T-cell (primary cell): ENCODE measurements at regions of chr16 and their contacts with region 1.

Region 1: GRCh38 chr16:67521095-67521804 is 7.4 kb upstream of the RIPOR1 start:
- DNase-seq: peak; percentile 85 to 99 (median 95)
- ATAC-seq: peak; percentile 86 to 94 (median 90)
- H3K4me3 ChIP-seq: peak overlapping the region; percentile 64
- H3K4me3 Mint-ChIP-seq: peak overlapping the region; percentile 86 to 96 (median 86)
- H3K27ac ChIP-seq: peak overlapping the region; percentile 97
- H3K27ac Mint-ChIP-seq: peak overlapping the region; percentile 95 to 96
- H3K4me1 ChIP-seq: peaks cover 0 to 37% of the 10 kb centered on the region in 2 experiments
- H3K4me1 Mint-ChIP-seq: peaks cover 18 to 37% (median 35%) of the 10 kb centered on the region in 3 donors
- H3K27me3 ChIP-seq: no peaks in the 10 kb centered on the region
- H3K27me3 Mint-ChIP-seq: no peaks in the 10 kb centered on the region

Region 2: GRCh38 chr16:67470359-67470758 is 50.9 kb before region 1 on chr16:
- CTCF ChIA-PET with region 1: no interaction called
- POLR2A ChIA-PET with region 1: no interaction called
- DNase-seq: no peak
- ATAC-seq: no peak
- H3K4me3 ChIP-seq: no peak overlapping the region
- H3K4me3 Mint-ChIP-seq: no peak overlapping the region
- H3K27ac ChIP-seq: no peak overlapping the region
- H3K27ac Mint-ChIP-seq: no peak overlapping the region
- H3K4me1 ChIP-seq: peaks cover 0 to 25% of the 10 kb centered on the region in 2 experiments
- H3K4me1 Mint-ChIP-seq: peaks cover 62 to 78% (median 63%) of the 10 kb centered on the region in 3 donors
- H3K27me3 ChIP-seq: no peaks in the 10 kb centered on the region
- H3K27me3 Mint-ChIP-seq: no peaks in the 10 kb centered on the region

Region 3: GRCh38 chr16:67480833-67481560 is 40.3 kb before region 1 on chr16 and contains the start of gene ATP6V0D1:
- CTCF ChIA-PET with region 1: interaction called in 1 of 2 experiments, 27 read pairs
- POLR2A ChIA-PET with region 1: interaction called in 1 of 2 experiments, 3 read pairs
- DNase-seq: peak; percentile 96 to 99 (median 98)
- ATAC-seq: peak; percentile 89 to 95 (median 92)
- H3K4me3 ChIP-seq: peak within 1 kb of the TSS; percentile 93 to 100
- H3K4me3 Mint-ChIP-seq: peak within 1 kb of the TSS; percentile 93 to 97 (median 95)
- H3K27ac ChIP-seq: peak within 1 kb of the TSS; percentile 98
- H3K27ac Mint-ChIP-seq: peak within 1 kb of the TSS; percentile 92 to 99
- H3K4me1 ChIP-seq: peaks cover 5 to 51% of the 10 kb centered on the region in 2 experiments
- H3K4me1 Mint-ChIP-seq: peaks cover 49 to 68% (median 54%) of the 10 kb centered on the region in 3 donors
- H3K27me3 ChIP-seq: no peaks in the 10 kb centered on the region
- H3K27me3 Mint-ChIP-seq: no peaks in the 10 kb centered on the region
- total RNA-seq, gene ATP6V0D1: 41.5 to 49.6 (median 45.8) TPM

Region 4: GRCh38 chr16:67546761-67547422 is 25.6 kb after region 1 on chr16:
- CTCF ChIA-PET with region 1: interaction called, 4 to 21 read pairs
- POLR2A ChIA-PET with region 1: no interaction called
- DNase-seq: peak in 33 of 35 experiments; percentile 37 to 88 (median 63)
- ATAC-seq: peak; percentile 39 to 52 (median 50)
- H3K4me3 ChIP-seq: peak overlapping the region; percentile 10 to 28
- H3K4me3 Mint-ChIP-seq: peak overlapping the region; percentile 67 to 73 (median 72)
- H3K27ac ChIP-seq: peak overlapping the region; percentile 67
- H3K27ac Mint-ChIP-seq: peak overlapping the region; percentile 99
- H3K4me1 ChIP-seq: peaks cover 16 to 50% of the 10 kb centered on the region in 2 experiments
- H3K4me1 Mint-ChIP-seq: peaks cover 51 to 68% (median 58%) of the 10 kb centered on the region in 3 donors
- H3K27me3 ChIP-seq: no peaks in the 10 kb centered on the region
- H3K27me3 Mint-ChIP-seq: no peaks in the 10 kb centered on the region

Region 5: GRCh38 chr16:67641779-67642708 is 120.8 kb after region 1 on chr16:
- CTCF ChIA-PET with region 1: interaction called, 13 to 29 read pairs
- POLR2A ChIA-PET with region 1: interaction called in 1 of 2 experiments, 3 read pairs
- DNase-seq: no peak
- ATAC-seq: no peak
- H3K4me3 ChIP-seq: no peak overlapping the region
- H3K4me3 Mint-ChIP-seq: no peak overlapping the region
- H3K27ac ChIP-seq: no peak overlapping the region
- H3K27ac Mint-ChIP-seq: peak overlapping the region; percentile 11 to 39
- H3K4me1 ChIP-seq: peaks cover 0 to 28% of the 10 kb centered on the region in 2 experiments
- H3K4me1 Mint-ChIP-seq: peaks cover 6 to 17% (median 16%) of the 10 kb centered on the region in 3 donors
- H3K27me3 ChIP-seq: no peaks in the 10 kb centered on the region
- H3K27me3 Mint-ChIP-seq: no peaks in the 10 kb centered on the region

Region 6: DNA sequence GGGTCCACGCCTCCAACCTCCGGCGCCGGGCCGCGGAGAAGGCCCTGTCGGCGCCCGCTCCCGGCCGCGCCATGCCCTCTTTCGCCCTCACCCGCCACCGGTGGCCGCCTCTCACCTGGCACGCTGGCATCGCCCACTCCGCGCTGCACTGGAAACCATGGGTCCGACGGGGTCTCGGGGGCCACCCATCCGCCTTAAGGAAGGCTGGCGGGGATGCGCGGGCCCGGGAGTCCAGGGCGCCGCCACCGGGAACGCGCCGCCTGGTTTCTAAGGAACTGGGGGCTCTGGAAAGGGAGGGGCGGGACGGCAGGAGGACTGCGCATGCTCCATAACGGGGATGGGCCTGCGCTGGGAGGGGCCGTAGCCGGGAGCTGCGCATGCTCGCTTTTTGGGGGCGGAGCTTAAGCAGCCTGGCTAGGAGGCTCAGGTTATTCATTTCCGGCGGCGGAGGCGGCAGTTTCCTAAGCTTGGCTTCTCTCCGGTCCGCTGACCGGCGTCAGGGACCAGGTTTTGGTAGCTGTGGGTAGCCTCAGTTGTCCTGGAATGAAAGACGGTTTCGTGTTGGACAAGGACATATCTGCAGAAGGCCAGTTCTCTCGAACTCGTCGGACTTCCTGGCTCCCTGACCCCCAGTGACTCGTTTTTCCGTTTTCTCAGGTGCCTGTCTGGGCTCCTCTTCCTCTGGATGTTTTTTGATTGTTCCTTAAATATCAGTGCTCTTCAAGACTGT is 198.0 kb after region 1 on chr16 and contains the start of gene GFOD2:
- CTCF ChIA-PET with region 1: interaction called in 1 of 2 experiments, 10 read pairs
- POLR2A ChIA-PET with region 1: no interaction called
- DNase-seq: peak; percentile 86 to 99 (median 96)
- ATAC-seq: peak; percentile 92 to 93 (median 92)
- H3K4me3 ChIP-seq: peak within 1 kb of the TSS; percentile 93 to 97
- H3K4me3 Mint-ChIP-seq: peak within 1 kb of the TSS; percentile 95 to 99 (median 96)
- H3K27ac ChIP-seq: peak within 1 kb of the TSS; percentile 90
- H3K27ac Mint-ChIP-seq: peak within 1 kb of the TSS; percentile 99 to 100
- H3K4me1 ChIP-seq: peaks cover 12 to 20% of the 10 kb centered on the region in 2 experiments
- H3K4me1 Mint-ChIP-seq: peaks cover 34 to 49% (median 35%) of the 10 kb centered on the region in 3 donors
- H3K27me3 ChIP-seq: no peaks in the 10 kb centered on the region
- H3K27me3 Mint-ChIP-seq: no peaks in the 10 kb centered on the region
- total RNA-seq, gene GFOD2: 8.5 to 23.2 (median 16.7) TPM